A549 (cell line): ENCODE measurements at regions of chr7 and their contacts with region 1.

Region 1: GRCh38 chr7:73342645-73343044 is 14.7 kb downstream of the FKBP6 start:
- DNase-seq: peak; percentile 46 to 67
- ATAC-seq: peak; percentile 87 to 89
- H3K4me3 ChIP-seq: no peak overlapping the region
- H3K27ac ChIP-seq: no peak overlapping the region
- H3K4me1 ChIP-seq: peaks cover 8% of the 10 kb centered on the region; the same call in 2 of the 3 replicates
- CTCF ChIP-seq: peak; percentile 66
- EP300 ChIP-seq: no peak
- POLR2A ChIP-seq: no peak
- RAD21 ChIP-seq: peak; percentile 56 to 61

Region 2: GRCh38 chr7:73433924-73434700 is 91.5 kb after region 1 on chr7:
- CTCF ChIA-PET with region 1: interaction called, 14 read pairs
- POLR2A ChIA-PET with region 1: interaction called, 3 read pairs
- DNase-seq: no peak
- ATAC-seq: peak in 1 of 2 experiments; percentile 11; a peak in 3 of 6 replicates
- H3K4me3 ChIP-seq: peak overlapping the region; percentile 51
- H3K27ac ChIP-seq: peak overlapping the region; percentile 71 to 85
- H3K4me1 ChIP-seq: peaks cover 15% of the 10 kb centered on the region
- CTCF ChIP-seq: peak; percentile 24; the same call in 1 of the 3 replicates
- EP300 ChIP-seq: no peak
- POLR2A ChIP-seq: no peak
- RAD21 ChIP-seq: no peak

Region 3: DNA sequence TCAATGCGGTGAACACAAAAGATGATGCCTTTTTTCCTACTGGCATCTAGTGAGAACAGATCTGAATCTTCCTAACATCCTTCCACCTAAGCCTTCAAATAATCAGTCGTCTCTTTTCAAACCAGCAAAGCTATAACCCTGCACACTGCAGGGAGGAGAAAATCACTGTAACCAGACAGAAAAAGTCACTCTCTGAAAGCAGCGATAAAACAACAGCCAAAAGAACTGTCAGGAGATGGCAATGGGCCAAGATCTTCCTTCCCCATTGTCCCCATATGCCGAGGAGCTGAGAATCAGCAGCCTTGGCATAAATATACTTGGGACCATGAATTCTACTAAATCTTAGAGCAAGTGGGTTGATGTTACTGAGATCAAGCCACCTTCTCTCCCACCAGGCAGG is 104.0 kb after region 1 on chr7:
- CTCF ChIA-PET with region 1: interaction called, 57 read pairs
- POLR2A ChIA-PET with region 1: no interaction called
- DNase-seq: no peak
- ATAC-seq: no peak
- H3K4me3 ChIP-seq: no peak overlapping the region
- H3K27ac ChIP-seq: no peak overlapping the region
- H3K4me1 ChIP-seq: no peaks in the 10 kb centered on the region
- CTCF ChIP-seq: no peak
- EP300 ChIP-seq: no peak
- POLR2A ChIP-seq: no peak
- RAD21 ChIP-seq: no peak